ENCODE measurements at regions of chr9 and their contacts with region 1.

Region 1: DNA sequence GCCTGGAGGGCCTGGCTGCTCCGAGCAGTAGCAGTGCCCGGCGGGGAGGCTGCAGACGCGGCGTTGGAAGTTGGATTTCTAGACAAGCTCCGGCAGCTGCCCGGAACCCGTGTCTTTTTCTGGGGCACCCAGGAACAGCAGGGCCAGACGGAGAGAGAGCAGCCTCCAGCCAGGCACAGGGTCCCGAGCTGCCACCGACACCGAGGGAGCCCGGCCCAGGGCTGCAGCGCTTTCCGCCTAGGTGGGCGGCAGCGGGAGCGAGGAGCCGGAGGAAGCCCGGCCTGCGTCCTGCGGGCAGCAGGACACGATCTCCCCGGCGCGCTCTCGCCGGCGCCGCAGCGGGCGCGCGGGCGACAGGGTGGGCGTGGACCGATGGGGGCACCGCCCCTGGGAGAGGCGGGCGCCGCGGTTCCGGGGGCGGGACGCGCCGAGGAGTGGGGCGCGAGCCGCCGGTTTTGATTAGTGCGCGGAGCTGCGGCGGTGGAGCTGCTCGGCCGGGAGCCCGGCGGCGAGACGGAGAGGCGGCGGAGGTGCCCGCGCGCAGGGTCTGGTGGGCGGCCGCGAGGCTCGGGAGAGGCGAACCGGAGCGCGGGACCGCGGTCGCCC is at the start of gene UGCG:
- DNase-seq: peak; percentile 90
- ATAC-seq: peak; percentile 90
- H3K4me3 ChIP-seq: peak within 1 kb of the TSS; percentile 98
- H3K27ac ChIP-seq: peak within 1 kb of the TSS; percentile 96
- H3K4me1 ChIP-seq: peaks cover 14% of the 10 kb centered on the region
- H3K27me3 ChIP-seq: no peaks in the 10 kb centered on the region
- CTCF ChIP-seq: no peak
- POLR2A ChIP-seq: peak; percentile 94
- RAD21 ChIP-seq: peak; percentile 2; the same call in 1 of the 2 replicates
- total RNA-seq, gene UGCG: 104 and 234 TPM in 2 replicates

Region 2: DNA sequence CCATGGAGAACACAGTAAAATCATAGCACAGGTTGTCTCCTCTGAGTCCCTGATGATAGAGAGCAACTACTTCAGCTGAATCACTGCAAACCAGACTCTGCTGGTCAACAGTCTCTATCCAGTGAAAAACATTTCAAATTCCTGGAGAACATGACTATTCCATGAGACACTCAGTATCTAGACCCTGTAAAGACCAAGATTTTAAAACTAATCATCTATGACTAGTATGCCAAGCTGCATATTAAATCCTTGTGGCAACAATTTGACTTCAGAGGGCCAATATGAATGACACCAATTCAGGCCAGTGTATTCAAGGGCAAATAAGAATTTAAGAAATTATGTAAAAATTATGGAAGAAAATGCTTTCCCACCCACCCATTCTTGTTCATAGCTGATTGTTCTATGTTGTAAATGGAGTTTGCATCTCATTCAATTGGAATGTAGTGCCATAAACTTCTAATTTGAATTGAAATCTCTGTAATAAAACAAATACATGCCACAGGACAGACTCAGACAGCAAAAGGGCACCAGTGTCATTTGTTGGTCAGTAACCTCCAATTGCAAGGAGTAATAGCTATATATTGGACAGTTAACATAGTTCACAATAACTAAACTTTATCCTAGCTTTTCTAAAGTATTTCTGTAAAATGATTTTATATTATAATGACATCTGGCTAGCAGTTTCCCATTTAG is 778.1 kb before region 1 on chr9:
- CTCF ChIA-PET with region 1: no interaction called
- POLR2A ChIA-PET with region 1: no interaction called
- dilution Hi-C with region 1: no loop called
- in situ Hi-C with region 1: no loop called
- intact Hi-C with region 1: no loop called
- DNase-seq: peak; percentile 89
- ATAC-seq: peak; percentile 94
- H3K4me3 ChIP-seq: no peak overlapping the region
- H3K27ac ChIP-seq: peak overlapping the region; percentile 74
- H3K4me1 ChIP-seq: peaks cover 5% of the 10 kb centered on the region; the same call in 1 of the 2 replicates
- H3K27me3 ChIP-seq: no peaks in the 10 kb centered on the region
- CTCF ChIP-seq: no peak
- POLR2A ChIP-seq: no peak
- RAD21 ChIP-seq: no peak; the same call in 1 of the 2 replicates

Region 3: DNA sequence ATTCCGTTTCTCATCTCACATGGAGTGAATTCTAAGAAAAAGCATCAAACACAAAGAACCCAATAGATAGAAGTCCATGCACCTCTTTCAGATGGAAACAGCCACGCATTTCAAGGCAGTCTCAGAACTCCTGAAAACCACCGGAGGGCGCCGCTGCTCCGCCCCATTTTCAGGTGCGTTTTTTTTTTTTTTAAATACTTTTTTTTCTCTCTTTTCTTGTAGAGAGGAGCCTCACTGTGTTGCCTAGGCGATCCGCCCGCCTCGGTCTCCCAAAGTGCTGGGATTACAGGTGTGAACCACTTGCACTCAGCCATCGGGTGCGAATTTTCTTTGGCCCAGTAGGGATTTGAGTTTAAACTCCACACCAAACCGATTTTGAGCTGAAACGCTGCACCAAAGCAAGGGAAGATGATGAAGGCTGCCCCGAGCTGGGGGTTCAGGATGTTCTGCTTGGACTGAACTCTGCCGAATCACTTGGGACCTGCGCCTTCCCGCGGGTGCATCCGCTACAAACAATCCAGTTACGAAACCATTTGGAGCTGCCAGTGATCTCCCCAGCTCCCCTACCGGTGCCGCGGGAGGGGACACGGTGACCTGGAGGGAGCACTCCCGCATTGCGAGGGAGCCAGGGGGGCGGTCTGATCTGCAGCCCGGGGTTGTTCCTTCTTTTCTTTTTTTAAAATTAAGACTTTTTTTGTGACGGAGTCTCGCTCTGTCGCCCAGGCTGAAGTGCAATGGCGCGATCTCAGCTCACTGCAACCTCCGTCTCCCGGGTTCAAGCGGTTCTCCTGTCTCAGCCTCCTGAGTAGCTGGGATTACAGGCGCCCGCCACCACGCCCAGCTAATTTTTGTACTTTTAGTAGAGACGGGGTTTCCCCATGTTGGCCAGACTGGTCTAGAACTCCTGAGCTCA is 298.4 kb before region 1 on chr9:
- CTCF ChIA-PET with region 1: no interaction called
- POLR2A ChIA-PET with region 1: no interaction called
- dilution Hi-C with region 1: no loop called
- in situ Hi-C with region 1: no loop called
- intact Hi-C with region 1: loop called (anchors 10 kb)
- DNase-seq: peak; percentile 64
- ATAC-seq: peak; percentile 24
- H3K4me3 ChIP-seq: peak overlapping the region; percentile 57
- H3K27ac ChIP-seq: peak overlapping the region; percentile 61
- H3K4me1 ChIP-seq: 0 out of 2 replicates have a peak, but pooled peaks cover 2% of the 10 kb centered on the region
- H3K27me3 ChIP-seq: no peaks in the 10 kb centered on the region
- CTCF ChIP-seq: peak; percentile 75
- POLR2A ChIP-seq: no peak; the same call in 1 of the 2 replicates
- RAD21 ChIP-seq: peak; percentile 78

Region 4: GRCh38 chr9:111759762-111760639 is 136.5 kb before region 1 on chr9:
- CTCF ChIA-PET with region 1: interaction called, 6 read pairs
- POLR2A ChIA-PET with region 1: interaction called, 4 read pairs
- dilution Hi-C with region 1: no loop called
- in situ Hi-C with region 1: no loop called
- intact Hi-C with region 1: loop called (anchors 2 kb)
- DNase-seq: peak; percentile 91
- ATAC-seq: peak; percentile 95
- H3K4me3 ChIP-seq: no peak overlapping the region
- H3K27ac ChIP-seq: peak overlapping the region; percentile 24; the same call in 1 of the 2 replicates
- H3K4me1 ChIP-seq: peaks cover 3% of the 10 kb centered on the region; the same call in 1 of the 2 replicates
- H3K27me3 ChIP-seq: no peaks in the 10 kb centered on the region
- CTCF ChIP-seq: peak; percentile 83
- POLR2A ChIP-seq: no peak
- RAD21 ChIP-seq: peak; percentile 90

Region 5: DNA sequence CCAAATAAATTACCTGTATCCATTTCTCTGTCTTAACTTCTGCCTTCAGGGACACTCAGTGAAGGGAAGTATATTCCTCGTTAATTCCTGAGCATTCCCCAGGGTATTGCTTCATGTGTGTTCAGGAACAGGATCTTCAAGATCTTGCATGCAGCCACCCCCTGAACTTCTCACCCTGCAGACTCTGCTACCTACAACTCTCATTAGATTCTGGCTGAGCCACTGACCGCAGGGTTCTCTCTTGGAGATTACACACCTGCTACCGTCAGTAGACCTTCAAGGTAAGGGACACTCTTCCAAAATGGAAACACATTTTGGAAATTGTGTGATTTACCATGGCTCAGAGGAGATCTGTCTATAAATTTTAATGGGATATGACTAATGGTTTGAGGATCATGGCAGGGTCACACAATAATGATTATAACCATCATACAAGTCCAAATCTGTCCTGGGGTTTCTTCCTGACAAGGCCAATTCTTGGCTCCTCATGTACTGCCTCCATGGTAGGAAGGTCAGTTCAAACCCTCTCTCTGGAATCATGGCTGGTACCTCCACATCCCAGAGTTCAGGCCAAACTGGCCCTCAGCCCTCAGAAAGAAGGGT is 38.7 kb before region 1 on chr9:
- CTCF ChIA-PET with region 1: no interaction called
- POLR2A ChIA-PET with region 1: no interaction called
- dilution Hi-C with region 1: no loop called
- in situ Hi-C with region 1: loop called (anchors 5 kb)
- intact Hi-C with region 1: no loop called
- DNase-seq: no peak
- ATAC-seq: no peak
- H3K4me3 ChIP-seq: no peak overlapping the region
- H3K27ac ChIP-seq: no peak overlapping the region
- H3K4me1 ChIP-seq: no peaks in the 10 kb centered on the region; the same call in 1 of the 2 replicates
- H3K27me3 ChIP-seq: no peaks in the 10 kb centered on the region
- CTCF ChIP-seq: no peak
- POLR2A ChIP-seq: no peak
- RAD21 ChIP-seq: no peak

Region 6: DNA sequence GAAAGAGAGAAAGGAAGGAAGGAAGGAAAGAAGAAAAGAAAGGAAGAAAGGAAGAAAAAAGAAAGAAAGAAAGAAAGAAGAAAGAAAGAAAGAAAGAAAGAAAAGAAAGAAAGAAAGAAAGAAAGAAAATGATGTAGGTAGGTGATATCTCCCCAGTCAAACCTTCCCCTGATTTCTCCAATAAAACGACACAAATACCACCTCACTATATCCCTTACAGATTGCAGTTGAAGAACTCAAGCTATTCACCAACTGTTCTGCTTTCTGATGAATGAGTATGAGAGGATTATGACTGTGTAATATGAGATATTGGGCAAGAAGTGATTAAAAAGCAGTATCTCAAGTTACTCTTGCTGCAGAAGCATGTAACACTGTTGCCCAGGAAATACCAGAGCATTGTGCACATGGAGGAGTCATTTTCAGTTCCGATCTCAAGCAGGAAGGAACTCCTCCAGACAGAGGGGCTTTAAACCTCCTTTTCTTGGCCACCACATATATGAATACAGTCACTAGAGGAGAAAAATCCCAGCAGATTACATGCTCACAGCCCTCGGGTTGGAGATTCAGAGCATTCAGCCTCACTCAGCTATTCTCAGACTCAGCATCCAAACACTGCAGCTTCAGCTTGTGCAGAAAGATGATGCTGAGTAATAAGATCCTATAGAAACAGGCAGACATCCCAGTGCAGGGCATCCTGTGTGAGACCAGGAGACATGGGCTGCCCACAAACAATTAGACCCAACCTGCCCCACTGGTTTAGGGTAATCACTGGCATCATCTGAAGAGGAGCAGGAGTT is 61.6 kb after region 1 on chr9:
- CTCF ChIA-PET with region 1: no interaction called
- POLR2A ChIA-PET with region 1: no interaction called
- dilution Hi-C with region 1: no loop called
- in situ Hi-C with region 1: no loop called
- intact Hi-C with region 1: no loop called
- DNase-seq: peak; percentile 99
- ATAC-seq: peak; percentile 86
- H3K4me3 ChIP-seq: peak overlapping the region; percentile 42
- H3K27ac ChIP-seq: peak overlapping the region; percentile 96
- H3K4me1 ChIP-seq: peaks cover 23% of the 10 kb centered on the region
- H3K27me3 ChIP-seq: no peaks in the 10 kb centered on the region
- CTCF ChIP-seq: no peak
- POLR2A ChIP-seq: peak; percentile 79
- RAD21 ChIP-seq: peak; percentile 26; the same call in 1 of the 2 replicates

Region 7: DNA sequence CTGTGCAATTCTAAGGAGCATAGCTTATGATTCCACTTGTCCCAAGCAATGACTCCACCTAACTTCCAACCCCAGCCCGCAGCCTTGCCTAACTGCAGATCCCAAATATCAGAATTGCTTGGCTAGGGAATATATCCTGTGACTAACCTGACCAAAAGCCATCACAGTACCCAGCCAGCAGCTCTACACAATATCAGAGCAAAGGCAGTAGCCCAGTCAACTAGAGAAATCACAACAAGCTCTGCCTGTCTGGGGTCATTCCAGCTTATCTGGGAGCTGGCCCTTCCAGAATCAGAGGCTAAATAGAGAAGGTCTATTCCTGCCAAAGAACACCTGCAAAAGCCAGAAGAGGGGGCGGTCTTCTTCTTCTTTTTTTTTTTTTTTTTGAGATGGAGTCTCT is 580.9 kb after region 1 on chr9:
- CTCF ChIA-PET with region 1: no interaction called
- POLR2A ChIA-PET with region 1: no interaction called
- dilution Hi-C with region 1: no loop called
- in situ Hi-C with region 1: no loop called
- intact Hi-C with region 1: no loop called
- DNase-seq: no peak
- ATAC-seq: no peak
- H3K4me3 ChIP-seq: no peak overlapping the region
- H3K27ac ChIP-seq: no peak overlapping the region
- H3K4me1 ChIP-seq: no peaks in the 10 kb centered on the region
- H3K27me3 ChIP-seq: no peaks in the 10 kb centered on the region
- CTCF ChIP-seq: no peak
- POLR2A ChIP-seq: no peak
- RAD21 ChIP-seq: no peak

Measured in IMR-90 (cell line).